Activated T-helper 1 cell treated with anti-CD3 and anti-CD28 coated beads, Interleukin-12 subunit alpha, Interleukin-12 subunit beta, Interleukin-2, Interleukin-4 antibody, amounts not matched to agents 30 ng/mL and 10 ng/mL and 1 ng/mL, durations not matched to agents 14 hours and 24 hours and 36 hours (primary cell): ENCODE measurements at regions of chr1 and their contacts with region 1.

Region 1: GRCh38 chr1:63327417-63328139 is 5.2 kb downstream of the FOXD3 start:
- DNase-seq: peak; percentile 37
- H3K4me3 Mint-ChIP-seq: peak overlapping the region; percentile 17
- H3K27ac Mint-ChIP-seq: peak overlapping the region; percentile 72
- H3K4me1 Mint-ChIP-seq: peaks cover 17% of the 10 kb centered on the region
- H3K27me3 Mint-ChIP-seq: peaks cover 78% of the 10 kb centered on the region

Region 2: DNA sequence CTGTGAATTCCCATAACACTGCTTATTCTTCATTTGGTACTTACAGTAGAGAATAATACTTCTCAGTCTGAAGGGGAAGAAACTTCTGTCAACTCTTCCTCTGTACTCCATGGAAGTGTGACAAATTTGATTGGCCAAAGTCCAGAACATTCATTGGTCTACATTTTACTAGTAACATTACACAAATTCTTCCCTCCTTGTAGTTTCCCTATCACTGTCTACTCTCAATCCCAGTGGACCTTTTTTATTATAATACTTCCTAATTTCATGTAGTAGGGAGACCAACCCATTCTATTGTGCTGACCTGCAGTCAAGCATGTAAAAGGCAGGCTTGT is 114.5 kb after region 1 on chr1:
- intact Hi-C with region 1: loop called (anchors 1 kb)
- DNase-seq: no peak
- H3K4me3 Mint-ChIP-seq: no peak overlapping the region
- H3K27ac Mint-ChIP-seq: no peak overlapping the region
- H3K4me1 Mint-ChIP-seq: no peaks in the 10 kb centered on the region
- H3K27me3 Mint-ChIP-seq: no peaks in the 10 kb centered on the region

Region 3: GRCh38 chr1:63480057-63480456 is 152.5 kb after region 1 on chr1:
- intact Hi-C with region 1: no loop called
- DNase-seq: no peak
- H3K4me3 Mint-ChIP-seq: no peak overlapping the region
- H3K27ac Mint-ChIP-seq: no peak overlapping the region
- H3K4me1 Mint-ChIP-seq: no peaks in the 10 kb centered on the region
- H3K27me3 Mint-ChIP-seq: no peaks in the 10 kb centered on the region

Region 4: DNA sequence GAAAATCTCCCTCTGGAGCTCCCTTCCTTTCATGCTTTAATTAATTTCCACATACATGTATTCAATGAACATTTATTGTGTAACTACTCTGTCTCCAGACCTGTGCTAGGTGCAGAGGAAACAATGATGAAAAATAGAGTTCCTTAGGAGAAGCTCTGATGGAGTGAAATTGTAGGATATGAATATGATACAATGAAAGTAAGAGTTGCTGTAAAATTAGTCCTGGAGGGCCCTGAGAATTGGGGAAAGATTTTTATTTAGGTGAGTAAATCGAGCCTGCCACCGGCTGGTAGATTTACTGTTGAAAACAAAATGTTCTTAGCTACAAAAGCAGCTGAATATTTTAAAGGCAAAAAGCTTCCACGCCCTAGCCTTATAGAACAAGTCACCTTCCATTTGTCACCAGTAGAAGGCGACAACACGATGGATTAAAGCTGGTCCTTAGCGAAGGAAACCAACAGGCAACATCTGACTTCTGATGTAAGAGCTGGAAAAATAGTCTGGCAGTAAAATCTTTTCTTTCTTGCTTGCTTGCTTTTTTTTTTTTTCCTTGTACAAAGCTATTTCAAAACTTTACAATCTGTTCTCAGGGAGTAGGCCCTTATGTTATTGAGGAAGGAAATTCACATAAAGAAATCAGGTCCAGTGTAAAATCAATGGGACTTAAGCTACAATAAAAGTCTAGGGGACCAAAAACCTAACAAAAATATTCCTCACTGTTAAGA is 364.3 kb after region 1 on chr1:
- intact Hi-C with region 1: no loop called
- DNase-seq: peak; percentile 4
- H3K4me3 Mint-ChIP-seq: no peak overlapping the region
- H3K27ac Mint-ChIP-seq: no peak overlapping the region
- H3K4me1 Mint-ChIP-seq: peaks cover 6% of the 10 kb centered on the region
- H3K27me3 Mint-ChIP-seq: no peaks in the 10 kb centered on the region